Uterus (tissue), 4 donors: ENCODE measurements at regions of chr1 and their contacts with region 1.

Region 1: DNA sequence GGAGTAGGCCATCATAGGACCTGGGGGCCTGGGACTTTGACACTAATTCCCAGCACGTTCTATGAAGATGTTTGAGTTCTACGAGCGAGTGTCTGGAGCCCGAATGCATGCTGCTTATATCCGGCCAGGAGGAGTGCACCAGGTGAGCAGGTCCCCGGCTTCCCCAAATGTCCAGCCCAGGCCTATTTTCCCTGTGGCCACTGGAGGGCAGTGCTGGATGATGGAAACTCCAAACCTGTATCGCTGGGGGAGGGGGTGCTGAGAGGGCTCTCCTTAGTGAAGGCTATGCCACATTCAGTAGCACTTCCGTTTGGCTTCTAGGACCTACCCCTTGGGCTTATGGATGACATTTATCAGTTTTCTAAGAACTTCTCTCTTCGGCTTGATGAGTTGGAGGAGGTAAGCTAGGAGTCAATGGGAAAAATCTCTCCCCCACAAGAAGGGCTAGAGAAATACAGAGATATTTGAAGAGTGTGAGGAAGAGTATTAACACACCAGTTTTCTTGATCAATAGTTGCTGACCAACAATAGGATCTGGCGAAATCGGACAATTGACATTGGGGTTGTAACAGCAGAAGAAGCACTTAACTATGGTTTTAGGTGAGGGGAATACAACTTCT is 5.2 kb upstream of the FCER1G start:
- DNase-seq: peak; percentile 71 to 78
- H3K4me3 ChIP-seq: no peak overlapping the region
- H3K27ac ChIP-seq: no peak overlapping the region
- H3K4me1 ChIP-seq: peaks cover 4 to 9% of the 10 kb centered on the region in 2 donors
- H3K27me3 ChIP-seq: no peaks in the 10 kb centered on the region
- CTCF ChIP-seq: peak; percentile 82 to 87 (median 82)
- POLR2A ChIP-seq: no peak

Region 2: DNA sequence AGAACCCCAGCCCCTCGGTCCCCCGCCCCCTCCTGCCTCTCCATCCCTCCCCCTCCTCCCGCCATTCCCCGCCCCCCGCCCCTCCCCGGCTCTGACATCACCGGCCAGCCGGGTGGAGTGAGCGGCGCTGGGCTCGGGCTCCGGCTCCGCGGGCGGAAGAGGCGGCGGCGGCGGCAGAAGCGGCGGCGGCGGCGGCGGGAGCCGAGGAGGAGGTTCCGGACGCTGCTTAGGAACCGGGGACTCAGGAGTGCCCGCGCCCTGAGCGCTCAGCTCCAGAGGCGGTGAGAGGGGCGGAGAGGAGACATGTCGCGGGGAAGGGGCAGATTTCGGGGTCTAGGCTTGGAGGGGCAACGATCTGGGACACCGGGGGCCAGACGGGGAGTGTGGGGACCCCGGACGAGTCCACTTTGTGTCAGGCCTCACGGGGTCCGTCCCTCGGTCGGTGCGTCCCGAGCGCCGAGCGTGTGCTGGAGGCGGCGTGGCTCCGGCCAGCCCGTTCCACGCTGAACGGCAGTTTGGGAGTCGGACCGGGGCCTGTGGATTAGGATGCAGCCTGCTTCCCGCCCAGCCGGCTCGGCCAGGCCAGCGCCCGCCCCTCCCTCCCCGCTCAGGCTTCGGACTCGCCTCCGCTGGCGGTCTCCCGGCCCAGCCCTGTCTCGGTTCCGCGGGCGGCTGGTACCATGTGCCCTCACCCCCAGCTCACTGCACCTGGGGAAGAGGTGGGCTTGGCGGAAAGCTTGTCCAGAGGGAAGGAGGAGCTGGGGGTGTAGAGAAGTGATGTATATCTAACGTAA is 1004.5 kb before region 1 on chr1 and contains the start of gene PEA15:
- intact Hi-C with region 1: loop called (anchors 10 kb)
- DNase-seq: peak; percentile 76 to 80
- H3K4me3 ChIP-seq: peak within 1 kb of the TSS; percentile 62 to 70
- H3K27ac ChIP-seq: peak within 1 kb of the TSS; percentile 77 to 89
- H3K4me1 ChIP-seq: peaks cover 0 to 5% of the 10 kb centered on the region in 2 donors
- H3K27me3 ChIP-seq: no peaks in the 10 kb centered on the region
- CTCF ChIP-seq: no peak
- POLR2A ChIP-seq: peak; percentile 73 to 86
- total RNA-seq, gene PEA15: 52.1 to 147 (median 81.7) TPM

Region 3: GRCh38 chr1:161092621-161093028 is 117.3 kb before region 1 on chr1:
- intact Hi-C with region 1: no loop called
- DNase-seq: no peak
- H3K4me3 ChIP-seq: no peak overlapping the region
- H3K27ac ChIP-seq: no peak overlapping the region
- H3K4me1 ChIP-seq: no peaks in the 10 kb centered on the region
- H3K27me3 ChIP-seq: no peaks in the 10 kb centered on the region
- CTCF ChIP-seq: no peak
- POLR2A ChIP-seq: no peak